ENCODE measurements at regions of chr5 and their contacts with region 1.

Region 1: DNA sequence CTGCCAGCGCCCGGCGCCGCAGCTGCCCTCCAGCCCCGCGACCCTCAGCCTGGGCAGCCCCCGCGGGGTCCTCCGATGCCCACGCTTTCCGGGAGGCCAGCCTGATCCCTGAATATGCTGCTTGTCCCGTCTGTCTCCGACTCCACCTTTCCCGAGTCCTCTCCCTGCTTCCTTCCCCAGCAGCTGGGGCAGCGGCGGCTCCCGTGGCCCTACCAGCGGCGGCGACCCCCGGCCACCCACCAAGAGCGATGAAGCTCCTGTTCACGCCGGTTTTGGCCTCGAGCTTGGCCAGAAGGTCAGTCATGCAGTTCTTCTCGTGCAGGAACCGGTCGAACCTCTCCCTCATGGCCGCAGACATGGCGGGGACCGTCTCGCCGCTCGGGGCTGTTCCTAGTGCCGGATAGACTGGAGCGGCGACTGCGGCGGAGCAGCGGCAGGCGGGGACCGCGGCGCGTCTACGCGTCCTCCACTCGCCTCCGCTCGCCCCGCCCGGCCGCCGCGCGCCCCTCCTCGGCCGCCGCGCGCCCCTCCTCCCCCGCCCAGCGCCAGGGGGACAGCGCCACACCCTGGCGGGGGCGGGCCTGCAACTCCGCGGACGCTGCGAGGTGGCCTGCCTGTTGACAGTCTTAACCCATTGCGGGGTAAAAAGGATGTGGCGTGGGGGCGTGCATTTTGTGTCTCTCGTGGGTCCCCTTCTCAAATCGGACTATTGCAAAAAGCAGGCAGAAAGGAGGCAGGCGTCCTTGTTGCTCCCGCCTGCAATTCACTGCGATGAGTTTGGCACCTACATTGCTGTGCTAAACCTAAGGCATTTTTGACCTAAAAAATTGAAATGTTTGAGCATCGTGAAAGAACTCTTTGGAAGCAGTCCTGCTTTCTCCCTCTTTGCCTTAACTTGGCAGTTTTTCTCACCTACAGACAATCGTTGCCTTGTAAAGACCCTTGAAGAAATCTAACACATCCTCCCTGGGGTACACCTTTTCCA is at the start of gene REEP5:
- DNase-seq: peak; percentile 93
- H3K4me3 ChIP-seq: peak within 1 kb of the TSS; percentile 76 to 98 (median 97)
- H3K27ac ChIP-seq: peak within 1 kb of the TSS; percentile 97 to 99 (median 98)
- H3K4me1 ChIP-seq: peaks cover 42 to 54% (median 50%) of the 10 kb centered on the region in 4 donors
- H3K27me3 ChIP-seq: no peaks in the 10 kb centered on the region
- CTCF ChIP-seq: peak; percentile 84 to 89 (median 87)
- EP300 ChIP-seq: no peak
- POLR2A ChIP-seq: peak; percentile 71
- total RNA-seq, gene REEP5: 53.0 to 73.6 (median 62.2) TPM

Region 2: DNA sequence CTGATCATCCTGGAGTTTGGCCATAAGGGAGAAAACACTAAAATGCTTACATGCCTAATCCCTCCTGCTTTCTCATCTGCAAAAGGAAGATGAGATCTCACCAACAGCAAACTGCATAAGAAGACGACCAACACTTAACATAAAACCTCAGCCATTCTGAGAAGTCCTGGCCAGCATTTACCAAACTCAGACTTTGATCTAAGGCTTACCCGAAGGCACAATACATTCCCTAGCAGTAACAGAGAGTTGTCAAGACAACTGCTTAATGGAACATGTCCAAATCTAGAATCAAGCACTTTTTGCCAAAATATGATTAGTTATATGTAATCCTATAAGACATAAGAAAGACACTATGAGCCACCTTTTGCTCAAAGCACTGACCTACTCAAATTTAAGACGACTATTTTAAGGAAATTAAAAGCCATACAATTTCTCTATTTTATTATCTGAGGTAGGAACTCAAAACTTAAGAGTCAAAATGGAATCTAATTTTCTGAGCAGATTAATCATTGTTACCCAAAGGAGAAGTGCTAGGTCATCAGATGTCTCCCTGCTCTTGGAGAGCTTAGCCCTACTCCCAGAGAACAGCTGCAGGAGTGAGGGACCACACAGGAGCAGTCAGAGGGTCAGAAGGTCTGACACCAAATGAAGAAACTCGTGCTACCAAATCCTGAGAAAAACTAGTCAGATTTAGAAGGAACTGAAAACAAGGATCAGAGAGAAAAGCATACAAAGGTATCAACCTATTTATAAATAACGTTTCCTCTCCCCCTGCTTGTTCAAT is 542.4 kb before region 1 on chr5:
- intact Hi-C with region 1: no loop called
- DNase-seq: no peak
- H3K4me3 ChIP-seq: no peak overlapping the region
- H3K27ac ChIP-seq: no peak overlapping the region
- H3K4me1 ChIP-seq: peaks cover 0 to 18% (median 4%) of the 10 kb centered on the region in 4 donors
- H3K27me3 ChIP-seq: no peaks in the 10 kb centered on the region
- CTCF ChIP-seq: no peak
- EP300 ChIP-seq: no peak
- POLR2A ChIP-seq: no peak

Region 3: GRCh38 chr5:112860929-112861637 is 61.0 kb before region 1 on chr5 and contains the start of gene SRP19:
- intact Hi-C with region 1: loop called (anchors 5 kb)
- DNase-seq: peak; percentile 98
- H3K4me3 ChIP-seq: peak within 1 kb of the TSS; percentile 77 to 89 (median 80)
- H3K27ac ChIP-seq: peak within 1 kb of the TSS; percentile 82 to 87 (median 87)
- H3K4me1 ChIP-seq: peaks cover 29 to 36% (median 31%) of the 10 kb centered on the region in 4 donors
- H3K27me3 ChIP-seq: no peaks in the 10 kb centered on the region
- CTCF ChIP-seq: no peak
- EP300 ChIP-seq: no peak
- POLR2A ChIP-seq: peak; percentile 62
- total RNA-seq, gene SRP19: 39.0 to 61.9 (median 55.0) TPM

Region 4: GRCh38 chr5:112965733-112966700 is 43.9 kb after region 1 on chr5:
- intact Hi-C with region 1: loop called (anchors 2 kb)
- DNase-seq: no peak
- H3K4me3 ChIP-seq: no peak overlapping the region
- H3K27ac ChIP-seq: no peak overlapping the region
- H3K4me1 ChIP-seq: peaks cover 0 to 13% (median 11%) of the 10 kb centered on the region in 4 donors
- H3K27me3 ChIP-seq: no peaks in the 10 kb centered on the region
- CTCF ChIP-seq: no peak
- EP300 ChIP-seq: no peak
- POLR2A ChIP-seq: no peak

Region 5: DNA sequence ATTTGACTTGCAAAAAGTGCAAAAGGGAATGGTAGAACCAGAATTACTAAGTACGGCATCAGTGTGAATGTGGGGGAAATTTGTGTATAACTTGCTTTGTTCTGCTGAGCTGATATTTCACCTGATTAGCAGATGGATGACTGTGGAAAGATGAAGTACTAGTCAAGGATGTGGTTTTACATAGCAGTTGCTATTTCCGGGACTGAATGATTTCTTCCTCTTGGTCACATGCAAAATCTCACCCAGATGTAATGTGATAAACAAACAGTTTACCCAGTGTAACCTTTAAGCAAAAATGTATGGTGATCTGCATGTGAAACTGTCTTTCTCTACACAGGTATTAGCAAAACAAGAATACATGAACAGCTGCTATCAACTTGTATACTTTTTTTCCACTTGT is 100.5 kb after region 1 on chr5:
- intact Hi-C with region 1: no loop called
- DNase-seq: no peak
- H3K4me3 ChIP-seq: no peak overlapping the region
- H3K27ac ChIP-seq: no peak overlapping the region
- H3K4me1 ChIP-seq: no peaks in the 10 kb centered on the region
- H3K27me3 ChIP-seq: no peaks in the 10 kb centered on the region
- CTCF ChIP-seq: no peak
- EP300 ChIP-seq: no peak
- POLR2A ChIP-seq: no peak